SK-N-SH (cell line): ENCODE measurements at regions of chr10 and their contacts with region 1.

Region 1: GRCh38 chr10:110901954-110902819 is 16.8 kb downstream of the BBIP1 start:
- DNase-seq: no peak
- H3K4me3 ChIP-seq: no peak overlapping the region
- H3K27ac ChIP-seq: no peak overlapping the region; a peak in 1 of 4 replicates
- H3K4me1 ChIP-seq: peaks cover 5 to 9% of the 10 kb centered on the region in 2 experiments; a peak in 3 of 4 replicates
- H3K27me3 ChIP-seq: no peaks in the 10 kb centered on the region
- CTCF ChIP-seq: no peak
- EP300 ChIP-seq: no peak
- RAD21 ChIP-seq: no peak

Region 2: DNA sequence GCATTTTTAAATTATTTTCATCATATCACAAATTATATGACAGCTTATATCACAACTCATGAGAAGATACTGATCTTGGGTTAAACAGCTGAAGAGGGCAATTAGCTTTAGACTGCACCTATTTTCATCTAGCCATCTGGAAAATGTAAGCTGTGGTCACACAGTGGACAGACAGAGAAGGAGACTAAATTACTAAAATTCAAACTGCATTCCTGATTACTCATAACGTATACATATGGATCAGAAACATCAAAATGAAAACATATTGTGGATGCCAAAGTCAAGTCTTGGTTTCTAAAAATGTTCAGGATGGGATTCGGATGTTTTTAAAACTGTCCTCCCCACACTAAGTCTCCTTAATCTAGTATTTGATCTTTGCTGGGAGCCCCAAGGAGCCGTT is 10.2 kb after region 1 on chr10:
- CTCF ChIA-PET with region 1: interaction called, 10 read pairs
- POLR2A ChIA-PET with region 1: no interaction called
- DNase-seq: peak; percentile 42
- H3K4me3 ChIP-seq: no peak overlapping the region; a peak in 2 of 4 replicates
- H3K27ac ChIP-seq: peak overlapping the region; percentile 77 to 86
- H3K4me1 ChIP-seq: peaks cover 11 to 17% of the 10 kb centered on the region in 2 experiments; a peak in 3 of 4 replicates
- H3K27me3 ChIP-seq: no peaks in the 10 kb centered on the region
- CTCF ChIP-seq: no peak
- EP300 ChIP-seq: peak; percentile 63 to 87; a peak in 3 of 4 replicates
- RAD21 ChIP-seq: no peak

Region 3: GRCh38 chr10:111830359-111830758 is 928.2 kb after region 1 on chr10:
- CTCF ChIA-PET with region 1: no interaction called
- POLR2A ChIA-PET with region 1: no interaction called
- DNase-seq: no peak
- H3K4me3 ChIP-seq: no peak overlapping the region
- H3K27ac ChIP-seq: no peak overlapping the region
- H3K4me1 ChIP-seq: peaks cover 0 to 3% of the 10 kb centered on the region in 2 experiments; a peak in 1 of 4 replicates
- H3K27me3 ChIP-seq: no peaks in the 10 kb centered on the region
- CTCF ChIP-seq: no peak
- EP300 ChIP-seq: no peak
- RAD21 ChIP-seq: no peak